Activated B cell treated with CpG ODN at 0.5 μM for 24 hours (primary cell): ENCODE measurements at regions of chr17 and their contacts with region 1.

Region 1: GRCh38 chr17:39164675-39165143 is 1.3 kb downstream of the ARL5C start:
- DNase-seq: peak; percentile 64
- ATAC-seq: peak; percentile 95
- H3K4me3 Mint-ChIP-seq: peak overlapping the region; percentile 89
- H3K27ac Mint-ChIP-seq: no peak overlapping the region
- H3K4me1 Mint-ChIP-seq: peaks cover 23% of the 10 kb centered on the region
- H3K27me3 Mint-ChIP-seq: peaks cover 26% of the 10 kb centered on the region
- CTCF ChIP-seq: no peak

Region 2: GRCh38 chr17:39174907-39175694 is 10.4 kb after region 1 on chr17:
- CTCF ChIA-PET with region 1: interaction called, 48 read pairs
- POLR2A ChIA-PET with region 1: interaction called, 3 read pairs
- intact Hi-C with region 1: no loop called
- DNase-seq: peak; percentile 55
- ATAC-seq: peak; percentile 85
- H3K4me3 Mint-ChIP-seq: peak overlapping the region; percentile 60
- H3K27ac Mint-ChIP-seq: no peak overlapping the region
- H3K4me1 Mint-ChIP-seq: peaks cover 5% of the 10 kb centered on the region
- H3K27me3 Mint-ChIP-seq: peaks cover 19% of the 10 kb centered on the region
- CTCF ChIP-seq: no peak

Region 3: DNA sequence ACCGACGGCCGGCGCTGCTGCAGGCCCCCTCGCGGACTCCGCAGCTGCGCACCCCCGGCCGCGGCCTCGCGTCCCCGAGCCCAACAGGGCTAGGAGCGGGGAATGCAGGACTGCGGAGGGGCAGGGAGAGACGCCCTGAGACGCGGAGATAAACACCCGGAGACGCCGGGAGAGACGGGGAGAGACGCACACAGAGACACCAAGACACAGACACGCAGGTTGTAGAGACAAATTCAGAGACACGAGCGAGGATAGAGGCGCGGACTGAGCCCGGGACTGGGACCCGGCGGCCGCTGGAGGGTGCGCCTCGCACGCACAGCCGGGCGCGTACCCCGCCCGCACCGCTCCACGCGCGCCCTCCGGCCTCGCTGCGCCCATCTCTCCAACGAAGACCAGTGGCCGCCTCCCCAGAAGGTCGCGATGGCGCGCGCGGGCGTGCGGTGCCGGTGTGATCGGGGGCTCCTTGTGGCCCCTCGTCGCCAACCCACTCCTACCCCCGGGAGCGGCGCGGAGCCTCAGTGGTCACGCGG is 60.1 kb after region 1 on chr17:
- CTCF ChIA-PET with region 1: no interaction called
- POLR2A ChIA-PET with region 1: no interaction called
- intact Hi-C with region 1: no loop called
- DNase-seq: no peak
- ATAC-seq: peak; percentile 60
- H3K4me3 Mint-ChIP-seq: peak overlapping the region; percentile 73
- H3K27ac Mint-ChIP-seq: no peak overlapping the region
- H3K4me1 Mint-ChIP-seq: peaks cover 12% of the 10 kb centered on the region
- H3K27me3 Mint-ChIP-seq: peaks cover 39% of the 10 kb centered on the region
- CTCF ChIP-seq: no peak

Region 4: GRCh38 chr17:39235555-39236449 is 71.1 kb after region 1 on chr17:
- CTCF ChIA-PET with region 1: interaction called, 17 read pairs
- POLR2A ChIA-PET with region 1: interaction called, 5 read pairs
- intact Hi-C with region 1: loop called (anchors 1 kb)
- DNase-seq: no peak
- ATAC-seq: peak; percentile 27
- H3K4me3 Mint-ChIP-seq: no peak overlapping the region
- H3K27ac Mint-ChIP-seq: no peak overlapping the region
- H3K4me1 Mint-ChIP-seq: peaks cover 27% of the 10 kb centered on the region
- H3K27me3 Mint-ChIP-seq: peaks cover 15% of the 10 kb centered on the region
- CTCF ChIP-seq: no peak

Region 5: DNA sequence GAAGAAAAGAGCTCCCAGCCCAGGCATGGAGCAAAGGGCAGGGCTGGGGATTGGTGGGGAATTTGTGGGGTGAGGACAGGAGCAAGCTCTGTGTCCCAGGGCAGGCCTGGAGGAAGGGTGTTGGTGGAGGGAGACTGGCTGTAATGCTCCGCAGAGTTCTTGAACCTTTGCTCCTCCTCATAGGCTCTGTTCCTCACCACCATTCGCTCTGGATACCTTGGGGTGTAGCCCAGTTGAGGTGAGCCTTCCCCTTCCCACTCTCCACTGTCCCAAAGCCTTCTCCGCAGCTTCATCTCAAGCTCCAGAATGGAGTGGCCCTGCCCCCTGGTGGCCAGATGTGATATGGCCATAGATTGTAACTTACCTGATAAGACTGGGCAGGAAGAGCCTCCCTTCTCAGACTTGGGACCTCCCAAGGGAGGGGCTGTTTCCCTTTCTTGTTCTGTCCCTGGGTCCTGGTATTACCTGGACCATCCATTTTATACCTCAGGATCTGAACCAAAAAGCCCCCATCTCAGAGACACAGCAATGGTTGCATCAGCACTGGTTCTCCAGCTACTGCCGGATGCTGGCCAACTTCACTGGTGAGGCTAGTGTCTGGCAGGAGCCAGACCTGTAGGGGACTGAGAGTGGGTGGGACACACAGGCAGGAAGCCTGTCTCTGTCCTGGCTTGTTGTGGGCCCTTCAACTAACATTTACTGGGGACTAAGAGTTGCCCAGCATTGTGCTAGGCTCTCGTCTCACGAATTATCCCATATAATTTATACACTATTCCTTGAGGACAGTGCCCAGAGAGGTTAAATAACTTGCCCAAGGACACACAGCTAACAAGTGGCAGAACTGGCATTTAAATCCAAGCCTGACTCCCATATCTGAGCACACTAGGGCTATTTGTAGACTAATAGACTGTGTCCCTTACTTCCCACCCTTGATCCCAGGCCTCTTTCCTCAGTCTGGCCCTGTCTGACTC is 80.2 kb after region 1 on chr17:
- CTCF ChIA-PET with region 1: interaction called, 30 read pairs
- POLR2A ChIA-PET with region 1: interaction called, 4 read pairs
- intact Hi-C with region 1: loop called (anchors 1 kb)
- DNase-seq: peak; percentile 76
- ATAC-seq: peak; percentile 81
- H3K4me3 Mint-ChIP-seq: peak overlapping the region; percentile 56
- H3K27ac Mint-ChIP-seq: no peak overlapping the region
- H3K4me1 Mint-ChIP-seq: peaks cover 20% of the 10 kb centered on the region
- H3K27me3 Mint-ChIP-seq: peaks cover 3% of the 10 kb centered on the region
- CTCF ChIP-seq: peak; percentile 34